WTC11 (cell line): ENCODE measurements at regions of chr16 and their contacts with region 1.

Region 1: DNA sequence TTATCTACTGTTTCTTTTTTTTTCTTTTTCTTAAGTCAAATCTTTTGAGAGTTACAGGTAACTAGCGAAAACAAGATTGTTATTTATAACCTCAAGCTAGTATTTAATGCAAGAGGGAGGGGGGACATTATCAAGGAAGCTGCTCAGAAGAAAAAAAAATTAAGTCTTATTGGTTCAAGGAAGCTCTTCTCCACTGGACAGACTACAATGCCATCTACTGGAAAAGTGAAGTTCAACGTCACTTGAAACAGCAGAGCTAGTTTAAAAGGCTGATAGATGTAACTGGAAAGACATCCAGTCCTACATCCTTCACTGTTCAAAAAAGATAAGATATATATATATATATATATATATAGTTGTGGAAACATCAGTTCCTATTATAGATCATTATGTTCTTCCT is 418.0 kb upstream of the PSMD7 start:
- DNase-seq: no peak
- ATAC-seq: peak; percentile 30; the same call in 1 of the 2 replicates
- H3K4me3 Mint-ChIP-seq: no peak overlapping the region
- H3K27ac Mint-ChIP-seq: no peak overlapping the region
- H3K4me1 Mint-ChIP-seq: peaks cover 22% of the 10 kb centered on the region
- H3K27me3 Mint-ChIP-seq: no peaks in the 10 kb centered on the region
- CTCF ChIP-seq: no peak

Region 2: DNA sequence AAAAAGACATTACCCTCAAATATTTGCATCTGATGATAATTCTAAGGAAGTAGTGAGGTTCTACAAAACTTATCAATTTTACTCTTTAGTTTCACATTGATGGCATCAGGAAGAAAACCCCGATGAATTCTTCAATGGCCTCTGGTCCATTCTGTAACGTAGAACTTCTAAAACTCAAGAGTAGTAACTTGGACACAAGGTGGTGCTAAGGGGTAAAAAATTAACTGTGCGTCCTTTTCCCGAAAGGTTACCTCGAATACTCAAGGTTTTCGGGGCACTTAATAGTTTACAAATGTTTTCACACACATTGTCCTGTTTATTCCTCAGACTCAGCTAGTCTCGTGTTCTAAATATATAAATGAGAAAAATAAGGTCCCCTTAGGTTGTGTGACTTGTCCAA is 313.3 kb before region 1 on chr16:
- CTCF ChIA-PET with region 1: interaction called, 14 read pairs
- POLR2A ChIA-PET with region 1: no interaction called
- DNase-seq: no peak
- ATAC-seq: peak; percentile 52
- H3K4me3 Mint-ChIP-seq: no peak overlapping the region
- H3K27ac Mint-ChIP-seq: no peak overlapping the region
- H3K4me1 Mint-ChIP-seq: peaks cover 42% of the 10 kb centered on the region
- H3K27me3 Mint-ChIP-seq: no peaks in the 10 kb centered on the region
- CTCF ChIP-seq: no peak

Region 3: GRCh38 chr16:73743665-73744496 is 134.7 kb before region 1 on chr16:
- CTCF ChIA-PET with region 1: interaction called, 21 read pairs
- POLR2A ChIA-PET with region 1: no interaction called
- DNase-seq: peak; percentile 52
- ATAC-seq: peak; percentile 50
- H3K4me3 Mint-ChIP-seq: no peak overlapping the region
- H3K27ac Mint-ChIP-seq: no peak overlapping the region; the same call in 1 of the 2 replicates
- H3K4me1 Mint-ChIP-seq: peaks cover 12% of the 10 kb centered on the region
- H3K27me3 Mint-ChIP-seq: no peaks in the 10 kb centered on the region
- CTCF ChIP-seq: peak; percentile 36; the same call in 1 of the 2 replicates

Region 4: DNA sequence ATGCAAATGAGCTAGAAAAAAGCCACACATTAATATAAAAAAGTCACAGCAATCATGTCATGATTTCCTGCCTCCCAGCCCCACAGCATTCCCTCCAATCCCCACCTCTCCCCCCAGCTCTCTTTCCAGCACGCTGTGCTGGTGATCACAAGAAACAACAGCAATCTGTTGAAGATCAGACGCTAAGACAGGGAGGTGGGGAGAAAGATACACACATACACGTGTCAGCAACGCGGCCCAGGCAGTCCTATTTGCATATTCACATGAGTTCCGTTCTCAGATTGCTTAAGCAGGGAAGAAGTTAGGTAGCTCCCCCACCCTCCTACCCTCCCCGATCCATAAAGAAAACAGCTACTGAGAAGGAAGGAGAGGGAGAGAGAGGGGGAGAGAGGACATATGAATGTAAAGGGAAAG is 12.5 kb after region 1 on chr16:
- CTCF ChIA-PET with region 1: interaction called, 17 read pairs
- POLR2A ChIA-PET with region 1: no interaction called
- DNase-seq: peak; percentile 41
- ATAC-seq: peak; percentile 80
- H3K4me3 Mint-ChIP-seq: peak overlapping the region; percentile 72
- H3K27ac Mint-ChIP-seq: peak overlapping the region; percentile 51
- H3K4me1 Mint-ChIP-seq: peaks cover 69% of the 10 kb centered on the region
- H3K27me3 Mint-ChIP-seq: peaks cover 9% of the 10 kb centered on the region; the same call in 1 of the 2 replicates
- CTCF ChIP-seq: no peak

Region 5: GRCh38 chr16:74226338-74226954 is 347.8 kb after region 1 on chr16:
- CTCF ChIA-PET with region 1: interaction called, 10 read pairs
- POLR2A ChIA-PET with region 1: no interaction called
- DNase-seq: no peak
- ATAC-seq: peak; percentile 65
- H3K4me3 Mint-ChIP-seq: peak overlapping the region; percentile 47
- H3K27ac Mint-ChIP-seq: no peak overlapping the region
- H3K4me1 Mint-ChIP-seq: peaks cover 13% of the 10 kb centered on the region
- H3K27me3 Mint-ChIP-seq: no peaks in the 10 kb centered on the region
- CTCF ChIP-seq: no peak